ENCODE measurements at regions of chr10 and their contacts with region 1.

Region 1: DNA sequence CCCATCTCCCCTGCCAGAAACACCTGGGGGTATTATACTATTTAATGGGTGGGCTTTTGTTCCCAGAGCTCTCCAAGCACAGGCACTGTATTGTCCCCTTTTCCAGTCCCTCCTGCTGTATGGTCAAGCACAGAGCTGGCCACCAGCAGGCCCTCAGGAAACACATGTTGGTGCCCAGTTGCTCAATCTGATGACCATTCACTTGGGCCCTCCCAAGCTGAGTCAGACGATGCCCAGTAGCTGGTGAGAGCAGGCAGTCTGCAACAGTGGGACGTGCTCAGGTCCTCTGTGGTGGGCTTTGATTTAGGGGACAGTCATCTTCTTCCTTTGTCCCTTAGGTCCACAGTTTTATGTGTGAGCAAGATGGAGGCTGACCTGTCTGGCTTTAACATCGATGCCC is 11.8 kb downstream of the SFXN2 start:
- DNase-seq: no peak
- H3K4me3 Mint-ChIP-seq: no peak overlapping the region
- H3K27ac Mint-ChIP-seq: no peak overlapping the region
- H3K4me1 Mint-ChIP-seq: peaks cover 17% of the 10 kb centered on the region
- H3K27me3 Mint-ChIP-seq: no peaks in the 10 kb centered on the region

Region 2: DNA sequence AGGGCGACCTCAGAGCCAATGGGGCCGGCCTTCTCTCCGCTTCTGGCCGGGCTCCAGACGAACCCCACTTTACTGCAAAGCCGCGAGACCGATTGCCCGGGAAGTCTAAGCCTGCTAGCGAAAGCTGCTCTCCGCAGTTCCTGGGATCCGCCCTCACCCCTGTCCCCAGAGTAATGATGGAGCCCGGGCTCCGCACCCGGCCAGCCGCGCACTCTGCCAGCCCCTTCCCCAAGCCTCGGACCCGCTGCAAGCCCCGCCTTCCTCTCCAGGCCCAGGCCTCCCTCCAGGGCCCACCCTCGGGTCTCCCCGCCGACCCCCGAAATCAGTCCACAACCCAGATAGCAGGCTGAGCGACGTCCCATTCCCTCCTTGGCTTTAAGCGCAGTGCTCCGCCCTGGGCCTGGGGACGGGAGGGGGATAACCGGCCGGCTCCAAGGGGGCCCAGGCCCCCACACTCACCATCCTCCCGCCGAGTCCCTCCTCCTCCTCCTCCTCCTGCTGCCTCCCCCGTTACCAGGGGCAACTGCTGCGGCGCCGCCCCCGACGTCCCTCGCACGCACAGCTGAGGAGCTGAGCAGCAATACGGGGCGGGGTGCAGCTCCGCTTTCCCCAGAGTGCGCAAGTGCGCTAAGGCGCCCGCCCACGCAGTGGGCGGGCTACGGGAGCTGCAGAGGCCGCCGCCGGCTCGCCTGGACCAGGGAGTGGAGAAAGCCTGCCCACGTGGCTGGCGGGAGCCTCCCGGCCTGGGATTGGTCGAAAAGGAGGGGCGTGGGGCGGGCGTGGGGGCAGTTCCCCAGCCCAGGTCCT is 12.3 kb before region 1 on chr10 and contains the start of gene ARL3:
- CTCF ChIA-PET with region 1: interaction called, 12 read pairs
- POLR2A ChIA-PET with region 1: no interaction called
- DNase-seq: peak; percentile 97
- H3K4me3 Mint-ChIP-seq: peak within 1 kb of the TSS; percentile 81
- H3K27ac Mint-ChIP-seq: peak within 1 kb of the TSS; percentile 82
- H3K4me1 Mint-ChIP-seq: peaks cover 56% of the 10 kb centered on the region
- H3K27me3 Mint-ChIP-seq: no peaks in the 10 kb centered on the region
- total RNA-seq, gene ARL3: 4.4 to 5.0 TPM

Region 3: DNA sequence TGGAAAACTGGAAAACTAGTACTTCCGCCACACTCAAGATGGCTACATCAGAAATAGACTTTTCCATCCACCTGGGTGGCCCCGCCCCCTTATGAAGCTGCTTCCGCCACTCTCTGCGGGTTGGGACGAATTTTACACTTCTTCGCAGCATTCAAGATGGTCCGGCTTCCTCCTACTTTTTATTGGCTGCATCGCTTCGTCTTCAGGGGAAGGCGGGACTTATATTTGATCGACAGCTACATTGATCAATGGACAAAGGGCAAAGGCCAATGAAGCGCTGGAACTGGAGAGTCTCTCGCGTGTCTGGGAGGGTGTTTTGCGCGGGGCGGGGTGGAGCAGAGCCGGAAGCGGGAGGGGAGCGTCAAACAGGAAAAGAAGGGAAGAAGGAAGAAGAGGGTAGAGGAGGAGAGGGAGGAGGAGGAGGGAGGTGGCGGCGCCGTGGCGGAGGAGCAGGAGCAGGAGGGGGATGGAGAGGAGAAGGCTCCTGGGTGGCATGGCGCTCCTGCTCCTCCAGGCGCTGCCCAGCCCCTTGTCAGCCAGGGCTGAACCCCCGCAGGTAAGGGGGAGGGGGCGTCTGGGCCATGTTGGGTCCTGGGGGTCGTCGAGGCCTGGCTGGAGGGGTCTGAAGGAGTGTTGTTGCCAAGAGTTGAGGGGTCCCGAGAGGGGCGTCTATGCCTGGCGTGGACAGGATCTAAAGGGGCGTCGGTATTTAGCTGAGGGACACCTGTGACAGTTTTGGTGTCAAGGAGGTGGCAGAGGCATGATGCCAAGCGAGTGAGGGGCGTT is 17.5 kb after region 1 on chr10 and contains the start of gene WBP1L:
- CTCF ChIA-PET with region 1: interaction called, 11 read pairs
- POLR2A ChIA-PET with region 1: no interaction called
- DNase-seq: peak; percentile 97
- H3K4me3 Mint-ChIP-seq: peak within 1 kb of the TSS; percentile 91
- H3K27ac Mint-ChIP-seq: peak within 1 kb of the TSS; percentile 95
- H3K4me1 Mint-ChIP-seq: peaks cover 46% of the 10 kb centered on the region
- H3K27me3 Mint-ChIP-seq: no peaks in the 10 kb centered on the region
- total RNA-seq, gene WBP1L: 30.2 to 31.4 TPM